CD8-positive, alpha-beta T cell (primary cell): ENCODE measurements at regions of chr7 and their contacts with region 1.

Region 1: DNA sequence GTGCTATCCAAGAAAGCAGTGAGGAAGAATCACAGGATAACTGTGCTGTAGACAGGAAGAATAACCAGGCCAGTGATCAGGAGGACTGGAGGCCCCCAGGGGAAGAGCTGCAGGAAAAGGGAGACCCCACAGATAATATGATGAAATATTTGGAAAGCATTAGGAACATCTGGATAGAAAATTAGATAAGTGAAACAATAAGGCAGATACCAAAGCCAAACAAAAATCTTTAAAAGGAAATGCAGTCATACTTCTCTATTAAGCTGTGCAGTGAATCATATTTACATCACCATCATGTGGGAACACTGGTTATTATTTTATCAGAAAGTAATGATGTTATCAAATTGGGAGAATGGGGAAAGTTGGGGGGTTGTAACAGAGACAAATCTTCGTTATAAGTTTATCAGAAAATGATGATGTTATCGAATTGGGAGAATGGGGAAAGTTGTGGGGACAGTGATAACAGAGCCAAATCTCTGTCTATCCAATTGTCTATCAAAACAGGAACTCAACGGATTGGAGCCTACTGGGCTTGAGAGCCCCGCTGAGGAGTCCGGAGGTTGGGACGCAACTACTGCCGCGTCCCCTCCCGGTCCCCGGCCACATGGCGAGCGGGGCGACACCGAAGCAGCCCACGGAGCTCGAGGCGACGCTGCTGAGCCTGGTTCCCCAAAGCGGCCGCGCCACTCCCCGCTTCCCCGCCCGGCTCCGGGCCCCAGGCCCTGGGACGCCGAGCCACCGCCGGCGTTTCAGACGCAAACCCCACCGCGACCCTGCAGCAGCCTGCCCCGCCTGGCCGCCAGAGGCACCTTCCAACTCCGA is 14.0 kb upstream of the RALA start:
- DNase-seq: peak in 5 of 9 experiments; percentile 17 to 64 (median 35)
- ATAC-seq: peak; percentile 55
- H3K4me3 ChIP-seq: peak overlapping the region in 1 of 2 experiments; percentile 5
- H3K4me3 Mint-ChIP-seq: peak overlapping the region; percentile 62
- H3K27ac ChIP-seq: no peak overlapping the region
- H3K27ac Mint-ChIP-seq: peak overlapping the region; percentile 47
- H3K4me1 ChIP-seq: peaks cover 24% of the 10 kb centered on the region
- H3K4me1 Mint-ChIP-seq: peaks cover 34% of the 10 kb centered on the region
- H3K27me3 ChIP-seq: peaks cover 0 to 8% of the 10 kb centered on the region in 2 experiments
- H3K27me3 Mint-ChIP-seq: peaks cover 24% of the 10 kb centered on the region
- CTCF ChIP-seq: no peak

Region 2: GRCh38 chr7:39554583-39555165 is 54.6 kb before region 1 on chr7:
- CTCF ChIA-PET with region 1: no interaction called
- POLR2A ChIA-PET with region 1: no interaction called
- intact Hi-C with region 1: no loop called
- DNase-seq: no peak
- ATAC-seq: no peak
- H3K4me3 ChIP-seq: no peak overlapping the region
- H3K4me3 Mint-ChIP-seq: no peak overlapping the region
- H3K27ac ChIP-seq: no peak overlapping the region
- H3K27ac Mint-ChIP-seq: no peak overlapping the region
- H3K4me1 ChIP-seq: no peaks in the 10 kb centered on the region
- H3K4me1 Mint-ChIP-seq: no peaks in the 10 kb centered on the region
- H3K27me3 ChIP-seq: peaks cover 0 to 3% of the 10 kb centered on the region in 2 experiments
- H3K27me3 Mint-ChIP-seq: peaks cover 5% of the 10 kb centered on the region
- CTCF ChIP-seq: no peak

Region 3: DNA sequence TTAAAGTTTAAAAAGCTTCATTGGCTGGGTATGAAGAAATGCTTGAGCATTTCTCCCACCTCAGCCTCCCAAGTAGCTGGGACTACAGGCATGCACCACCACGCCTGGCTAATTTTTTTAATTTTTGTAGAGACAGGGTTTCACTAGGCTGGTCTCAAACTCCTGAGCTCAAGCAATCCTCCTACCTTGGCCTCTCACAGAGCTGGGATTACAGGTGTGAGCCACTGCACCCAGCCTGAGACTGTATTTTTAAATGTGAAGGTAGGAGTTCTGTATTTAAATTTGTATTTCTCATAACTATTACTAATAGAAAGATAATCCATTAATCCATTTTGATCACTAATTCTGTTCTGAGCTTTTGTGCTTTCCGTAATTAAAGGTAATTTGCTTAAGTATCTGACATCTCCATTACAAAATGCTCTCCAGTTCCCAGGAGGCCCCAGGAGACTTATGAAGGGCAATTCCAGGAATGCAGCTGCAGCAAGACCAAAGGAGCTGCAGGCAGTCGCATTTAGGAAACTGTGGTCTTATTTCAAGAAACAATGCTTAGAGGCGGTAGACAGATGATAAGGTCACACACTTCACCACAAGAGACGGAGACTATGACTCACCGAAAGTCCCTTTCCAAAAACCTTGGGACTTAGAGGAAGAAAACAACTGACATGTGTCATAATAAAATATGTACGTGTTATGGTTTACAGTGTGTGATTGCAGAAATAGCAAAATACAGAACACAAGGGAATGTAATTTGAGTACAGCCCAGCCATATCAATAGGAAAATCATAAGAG is 19.8 kb before region 1 on chr7:
- CTCF ChIA-PET with region 1: no interaction called
- POLR2A ChIA-PET with region 1: no interaction called
- intact Hi-C with region 1: loop called (anchors 2 kb)
- DNase-seq: peak in 8 of 9 experiments; percentile 34 to 85 (median 58)
- ATAC-seq: peak; percentile 77
- H3K4me3 ChIP-seq: no peak overlapping the region
- H3K4me3 Mint-ChIP-seq: no peak overlapping the region
- H3K27ac ChIP-seq: no peak overlapping the region
- H3K27ac Mint-ChIP-seq: peak overlapping the region; percentile 49
- H3K4me1 ChIP-seq: peaks cover 10% of the 10 kb centered on the region
- H3K4me1 Mint-ChIP-seq: peaks cover 22% of the 10 kb centered on the region
- H3K27me3 ChIP-seq: no peaks in the 10 kb centered on the region
- H3K27me3 Mint-ChIP-seq: no peaks in the 10 kb centered on the region
- CTCF ChIP-seq: no peak

Region 4: DNA sequence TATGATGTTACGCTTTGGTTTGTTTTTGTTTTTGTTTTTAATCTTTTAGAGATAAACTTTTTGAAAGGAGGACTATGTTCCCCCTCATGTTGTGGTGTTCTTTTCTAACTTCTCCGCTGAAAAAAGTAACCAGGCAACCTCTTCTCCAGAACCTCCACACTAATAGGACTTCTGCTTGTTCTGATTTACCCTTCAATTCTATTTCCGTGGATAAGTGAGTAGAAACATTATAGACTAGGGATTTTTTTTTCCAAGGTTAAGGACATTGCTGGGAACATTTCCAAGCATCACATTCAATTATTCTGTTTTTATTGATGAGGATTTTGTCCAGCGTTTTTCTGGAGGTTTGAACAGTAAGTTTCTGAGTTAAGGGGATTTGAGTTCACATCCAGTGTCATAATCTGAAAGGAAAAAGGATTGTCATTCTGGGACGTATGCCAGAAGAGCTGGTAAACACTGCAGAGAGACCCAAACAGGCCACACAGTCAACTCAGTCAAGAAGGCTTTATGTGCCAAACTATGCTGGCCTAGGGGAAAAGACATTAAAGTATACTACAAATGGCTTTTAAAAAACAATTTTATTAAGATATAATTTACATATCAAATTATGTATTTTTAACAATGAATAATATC is 14.2 kb before region 1 on chr7:
- CTCF ChIA-PET with region 1: no interaction called
- POLR2A ChIA-PET with region 1: interaction called, 3 read pairs
- intact Hi-C with region 1: loop called (anchors 2 kb)
- DNase-seq: no peak
- ATAC-seq: no peak
- H3K4me3 ChIP-seq: no peak overlapping the region
- H3K4me3 Mint-ChIP-seq: no peak overlapping the region
- H3K27ac ChIP-seq: no peak overlapping the region
- H3K27ac Mint-ChIP-seq: no peak overlapping the region
- H3K4me1 ChIP-seq: peaks cover 2% of the 10 kb centered on the region
- H3K4me1 Mint-ChIP-seq: peaks cover 16% of the 10 kb centered on the region
- H3K27me3 ChIP-seq: no peaks in the 10 kb centered on the region
- H3K27me3 Mint-ChIP-seq: no peaks in the 10 kb centered on the region
- CTCF ChIP-seq: no peak

Region 5: DNA sequence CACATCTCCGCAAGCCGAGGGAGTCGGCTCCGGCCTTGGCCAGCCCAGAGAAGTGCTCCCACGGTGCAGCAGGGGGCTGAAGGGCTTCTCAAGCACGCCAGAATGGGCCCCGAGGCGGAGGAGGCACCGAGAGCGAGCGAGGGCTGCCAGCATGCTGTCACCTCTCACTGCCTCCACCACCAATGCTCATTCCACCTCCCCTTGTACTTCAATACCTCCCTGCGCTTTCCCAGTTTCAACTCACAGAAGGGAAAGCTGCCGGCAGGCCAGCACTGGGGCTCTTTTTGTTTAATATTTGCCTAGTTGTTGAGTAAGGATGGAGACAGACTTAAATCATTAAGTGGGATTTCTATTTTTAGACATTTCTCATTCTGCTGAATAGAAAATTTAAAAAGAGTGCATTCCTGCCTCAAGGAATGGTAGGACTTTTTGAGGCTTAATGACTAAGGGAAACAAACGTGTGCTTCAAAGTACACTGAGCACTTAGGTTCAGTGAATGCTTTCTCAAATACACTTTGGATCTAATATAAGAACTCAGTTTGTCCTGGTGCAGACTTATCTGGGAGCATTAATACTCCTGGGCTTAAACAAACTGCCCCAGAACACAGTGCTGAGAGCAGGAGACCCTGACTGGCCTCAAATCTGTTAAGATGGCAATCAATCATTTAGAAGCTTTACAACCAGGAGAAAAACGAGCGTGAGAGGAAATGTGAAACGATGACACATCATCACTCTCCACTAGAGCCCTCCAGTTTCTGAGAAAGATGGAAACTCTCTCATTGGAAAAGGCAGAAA is 145.2 kb after region 1 on chr7:
- CTCF ChIA-PET with region 1: no interaction called
- POLR2A ChIA-PET with region 1: no interaction called
- intact Hi-C with region 1: no loop called
- DNase-seq: no peak
- ATAC-seq: no peak
- H3K4me3 ChIP-seq: no peak overlapping the region
- H3K4me3 Mint-ChIP-seq: no peak overlapping the region
- H3K27ac ChIP-seq: no peak overlapping the region
- H3K27ac Mint-ChIP-seq: no peak overlapping the region
- H3K4me1 ChIP-seq: no peaks in the 10 kb centered on the region
- H3K4me1 Mint-ChIP-seq: no peaks in the 10 kb centered on the region
- H3K27me3 ChIP-seq: no peaks in the 10 kb centered on the region
- H3K27me3 Mint-ChIP-seq: no peaks in the 10 kb centered on the region
- CTCF ChIP-seq: no peak